ENCODE measurements at regions of chr19 and their contacts with region 1.

Region 1: GRCh38 chr19:11987405-11988281 is 22.8 kb downstream of the ZNF763 start:
- DNase-seq: peak; percentile 85
- H3K4me3 ChIP-seq: peak overlapping the region; percentile 91 to 100 (median 93)
- H3K27ac ChIP-seq: peak overlapping the region; percentile 40
- H3K4me1 ChIP-seq: peaks cover 9% of the 10 kb centered on the region
- H3K27me3 ChIP-seq: no peaks in the 10 kb centered on the region
- CTCF ChIP-seq: no peak
- POLR2A ChIP-seq: peak; percentile 85

Region 2: GRCh38 chr19:11673608-11674041 is 314.0 kb before region 1 on chr19:
- CTCF ChIA-PET with region 1: interaction called, 12 read pairs
- POLR2A ChIA-PET with region 1: no interaction called
- dilution Hi-C with region 1: no loop called
- intact Hi-C with region 1: loop called (anchors 2 kb)
- DNase-seq: peak; percentile 81
- H3K4me3 ChIP-seq: peak overlapping the region in 2 of 3 experiments; percentile 36 to 51
- H3K27ac ChIP-seq: no peak overlapping the region
- H3K4me1 ChIP-seq: peaks cover 6% of the 10 kb centered on the region
- H3K27me3 ChIP-seq: no peaks in the 10 kb centered on the region
- CTCF ChIP-seq: peak; percentile 79 to 86
- POLR2A ChIP-seq: no peak

Region 3: DNA sequence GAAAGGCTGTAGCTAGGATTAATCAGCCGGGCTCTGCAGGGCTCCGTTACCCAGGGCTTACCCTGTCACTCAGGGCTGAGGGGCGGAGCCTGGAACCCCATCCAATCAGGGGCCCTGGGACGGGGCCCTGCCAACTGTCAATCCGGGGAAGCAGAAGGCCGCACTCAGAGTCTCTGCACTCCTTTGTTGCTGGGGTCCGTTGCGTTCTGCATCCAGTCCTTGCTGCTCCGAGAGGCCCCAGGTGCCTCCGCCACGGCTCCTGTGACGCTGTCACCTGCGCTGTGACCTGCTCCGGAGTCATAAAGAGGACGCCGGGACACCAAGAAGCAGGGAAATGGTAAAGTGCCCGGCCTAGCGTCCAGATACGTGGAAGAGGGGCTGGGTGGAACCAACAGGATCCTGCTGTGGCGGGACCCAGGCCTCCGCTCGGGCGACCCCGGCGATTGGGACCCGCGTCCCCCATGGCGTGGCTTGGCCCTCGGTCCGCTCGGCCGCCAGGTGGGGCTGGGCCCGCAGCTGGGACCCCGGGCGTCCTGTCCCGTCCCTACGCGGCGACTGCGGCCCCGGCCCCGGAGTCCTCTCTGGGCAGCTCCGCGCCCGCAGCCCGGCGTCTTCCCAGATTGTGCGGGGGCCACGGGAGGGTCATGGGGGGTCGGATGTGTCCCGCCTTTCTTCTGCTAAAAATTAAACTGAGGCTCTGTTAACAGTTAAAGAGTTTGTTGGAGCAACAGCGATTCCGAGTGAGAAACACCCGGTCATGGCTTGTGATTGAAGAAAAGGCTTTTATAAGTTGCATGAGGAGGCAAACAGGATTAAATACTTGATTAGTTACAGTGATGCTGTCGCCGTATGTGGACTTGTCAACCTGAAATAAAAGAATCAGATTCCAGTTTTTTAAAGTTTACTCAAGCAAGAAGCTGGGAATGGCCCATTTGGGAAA is 189.0 kb before region 1 on chr19 and contains the start of gene ZNF491:
- CTCF ChIA-PET with region 1: interaction called, 74 read pairs
- POLR2A ChIA-PET with region 1: no interaction called
- dilution Hi-C with region 1: no loop called
- intact Hi-C with region 1: no loop called
- DNase-seq: peak; percentile 83
- H3K4me3 ChIP-seq: peak within 1 kb of the TSS; percentile 39 to 75 (median 62)
- H3K27ac ChIP-seq: no peak within 1 kb of the TSS
- H3K4me1 ChIP-seq: peaks cover 7% of the 10 kb centered on the region
- H3K27me3 ChIP-seq: no peaks in the 10 kb centered on the region
- CTCF ChIP-seq: peak; percentile 13 to 21
- POLR2A ChIP-seq: peak; percentile 52
- total RNA-seq, gene ZNF491: 0.85 and 1.1 TPM in 2 replicates

Region 4: GRCh38 chr19:11856596-11857250 is 130.9 kb before region 1 on chr19:
- CTCF ChIA-PET with region 1: no interaction called
- POLR2A ChIA-PET with region 1: no interaction called
- dilution Hi-C with region 1: no loop called
- intact Hi-C with region 1: no loop called
- DNase-seq: no peak
- H3K4me3 ChIP-seq: no peak overlapping the region
- H3K27ac ChIP-seq: no peak overlapping the region
- H3K4me1 ChIP-seq: no peaks in the 10 kb centered on the region
- H3K27me3 ChIP-seq: no peaks in the 10 kb centered on the region
- CTCF ChIP-seq: no peak
- POLR2A ChIP-seq: no peak

Region 5: DNA sequence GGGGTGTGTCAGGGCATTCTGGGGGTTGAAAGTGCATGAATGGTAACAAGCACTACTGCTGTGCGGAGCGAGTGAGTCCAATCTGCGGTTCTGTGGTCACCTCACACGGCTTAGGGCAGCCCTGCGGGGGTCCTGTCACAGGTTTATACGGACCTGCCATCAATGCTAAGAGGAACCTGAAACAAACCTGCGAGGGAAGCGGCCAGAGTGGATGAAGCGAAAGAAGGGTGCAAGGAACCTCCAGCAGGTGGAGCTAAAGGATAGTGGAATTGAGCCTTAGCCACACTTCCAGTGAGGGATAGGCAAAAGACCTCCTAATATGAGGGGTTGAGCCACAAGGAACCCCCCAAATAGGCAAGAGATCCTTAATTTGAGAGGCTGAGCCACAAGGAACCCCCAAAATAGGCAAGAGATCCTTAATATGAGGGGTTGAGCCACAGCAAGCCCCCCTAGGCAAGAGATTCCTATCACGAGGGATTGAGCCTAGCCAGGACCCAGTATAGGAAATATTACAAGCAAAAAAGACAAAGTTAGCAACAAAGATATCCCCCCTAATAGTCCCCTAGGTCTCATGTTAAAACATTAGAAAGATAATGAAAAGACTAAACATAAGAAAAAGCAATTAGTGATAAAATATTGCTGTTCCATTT is 106.4 kb before region 1 on chr19:
- CTCF ChIA-PET with region 1: interaction called, 39 read pairs
- POLR2A ChIA-PET with region 1: no interaction called
- dilution Hi-C with region 1: no loop called
- intact Hi-C with region 1: loop called (anchors 1 kb)
- DNase-seq: peak; percentile 54
- H3K4me3 ChIP-seq: no peak overlapping the region
- H3K27ac ChIP-seq: no peak overlapping the region
- H3K4me1 ChIP-seq: no peaks in the 10 kb centered on the region
- H3K27me3 ChIP-seq: no peaks in the 10 kb centered on the region
- CTCF ChIP-seq: peak; percentile 68 to 70
- POLR2A ChIP-seq: no peak

Region 6: GRCh38 chr19:11964858-11965645 is 22.6 kb before region 1 on chr19 and contains the start of gene ZNF763:
- CTCF ChIA-PET with region 1: interaction called, 27 read pairs
- POLR2A ChIA-PET with region 1: no interaction called
- dilution Hi-C with region 1: no loop called
- intact Hi-C with region 1: loop called (anchors 1 kb)
- DNase-seq: peak; percentile 48
- H3K4me3 ChIP-seq: peak within 1 kb of the TSS; percentile 24 to 66 (median 51)
- H3K27ac ChIP-seq: no peak within 1 kb of the TSS
- H3K4me1 ChIP-seq: no peaks in the 10 kb centered on the region
- H3K27me3 ChIP-seq: no peaks in the 10 kb centered on the region
- CTCF ChIP-seq: no peak
- POLR2A ChIP-seq: no peak
- total RNA-seq, gene ZNF763: 0.48 and 0.77 TPM in 2 replicates

Region 7: DNA sequence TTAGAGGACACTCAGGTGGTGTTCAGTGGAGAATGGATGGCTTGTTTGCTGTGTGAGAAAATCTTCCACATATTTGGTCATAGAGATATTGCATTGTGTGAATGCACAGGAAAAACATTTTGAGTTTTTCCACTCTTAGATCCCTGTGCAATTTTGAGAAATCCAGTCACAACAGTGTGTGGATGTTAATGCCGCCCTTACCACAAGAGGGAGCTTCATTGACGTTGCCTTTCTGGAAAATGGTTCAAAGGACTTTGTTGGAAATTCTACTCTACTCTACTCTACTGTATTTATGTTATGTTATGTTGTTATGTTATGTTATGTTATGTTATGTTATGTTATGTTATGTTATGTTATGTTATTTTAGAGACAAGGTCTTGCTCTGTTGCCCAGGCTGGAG is 139.1 kb after region 1 on chr19:
- CTCF ChIA-PET with region 1: no interaction called
- POLR2A ChIA-PET with region 1: no interaction called
- dilution Hi-C with region 1: no loop called
- intact Hi-C with region 1: no loop called
- DNase-seq: no peak
- H3K4me3 ChIP-seq: no peak overlapping the region
- H3K27ac ChIP-seq: no peak overlapping the region
- H3K4me1 ChIP-seq: no peaks in the 10 kb centered on the region
- H3K27me3 ChIP-seq: no peaks in the 10 kb centered on the region
- CTCF ChIP-seq: peak; percentile 15 to 37
- POLR2A ChIP-seq: no peak

Region 8: DNA sequence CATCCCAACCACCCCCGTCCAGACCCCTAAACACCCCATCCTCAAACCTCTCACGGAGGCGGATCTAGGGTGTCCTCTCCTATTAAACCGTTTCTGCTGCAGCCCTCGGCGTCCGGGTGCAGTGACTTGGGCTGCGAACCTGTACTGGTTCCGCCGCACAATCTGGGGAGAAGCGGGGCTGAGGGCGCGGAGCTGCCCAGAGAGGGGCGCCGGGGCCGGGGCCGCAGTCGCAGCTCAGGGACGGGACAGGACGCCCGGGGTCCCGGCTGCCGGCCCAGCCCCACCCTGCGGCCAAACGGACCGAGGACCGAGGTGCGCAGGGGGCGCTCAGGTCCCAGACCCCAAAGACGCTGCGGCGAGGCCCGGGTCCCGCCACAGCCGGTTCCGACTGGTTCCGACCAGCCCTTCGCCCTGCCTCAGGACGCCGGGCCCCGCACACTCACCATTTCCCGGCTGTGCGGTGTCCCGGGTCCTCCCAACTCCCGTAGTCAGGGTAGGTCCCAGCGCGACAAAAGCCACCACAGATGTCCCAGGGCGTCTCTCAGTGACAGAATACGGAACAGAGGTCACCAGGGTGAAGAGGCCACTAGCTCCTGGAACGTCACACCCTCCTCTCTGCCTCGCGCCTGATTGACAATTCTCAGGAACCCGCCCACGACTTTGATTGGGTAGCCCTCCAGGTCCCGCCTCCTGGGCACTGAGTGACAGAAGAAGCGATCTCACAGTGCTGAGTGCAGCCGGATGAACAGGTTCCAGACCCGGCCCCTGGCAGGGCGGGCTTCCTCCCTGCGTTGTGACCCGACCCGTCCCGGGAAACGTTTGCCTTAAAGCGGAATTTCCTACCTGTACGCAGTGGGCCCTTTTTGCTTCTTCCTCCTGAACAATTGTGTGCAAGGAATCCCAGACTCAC is 306.9 kb after region 1 on chr19 and contains the start of gene ZNF44:
- CTCF ChIA-PET with region 1: no interaction called
- POLR2A ChIA-PET with region 1: no interaction called
- dilution Hi-C with region 1: no loop called
- intact Hi-C with region 1: loop called (anchors 1 kb)
- DNase-seq: peak; percentile 95
- H3K4me3 ChIP-seq: peak within 1 kb of the TSS; percentile 43 to 91 (median 63)
- H3K27ac ChIP-seq: peak within 1 kb of the TSS; percentile 56
- H3K4me1 ChIP-seq: peaks cover 3% of the 10 kb centered on the region
- H3K27me3 ChIP-seq: no peaks in the 10 kb centered on the region
- CTCF ChIP-seq: no peak
- POLR2A ChIP-seq: peak; percentile 51
- total RNA-seq, gene ZNF44: 5.2 and 7.4 TPM in 2 replicates

Measured in endothelial cell of umbilical vein (primary cell).